IMR-90 (cell line): ENCODE measurements at regions of chr5 and their contacts with region 1.

Region 1: GRCh38 chr5:18113721-18114120 is 479.5 kb downstream of the TAF11L14 start:
- DNase-seq: peak; percentile 12
- ATAC-seq: no peak
- H3K4me3 ChIP-seq: no peak overlapping the region
- H3K27ac ChIP-seq: no peak overlapping the region
- H3K4me1 ChIP-seq: no peaks in the 10 kb centered on the region
- H3K27me3 ChIP-seq: no peaks in the 10 kb centered on the region
- CTCF ChIP-seq: peak; percentile 48
- POLR2A ChIP-seq: no peak
- RAD21 ChIP-seq: peak; percentile 56

Region 2: GRCh38 chr5:17255471-17256021 is 858.2 kb before region 1 on chr5:
- CTCF ChIA-PET with region 1: no interaction called
- POLR2A ChIA-PET with region 1: no interaction called
- dilution Hi-C with region 1: no loop called
- in situ Hi-C with region 1: no loop called
- intact Hi-C with region 1: loop called (anchors 10 kb)
- DNase-seq: no peak
- ATAC-seq: no peak; the same call in 1 of the 2 replicates
- H3K4me3 ChIP-seq: no peak overlapping the region
- H3K27ac ChIP-seq: no peak overlapping the region
- H3K4me1 ChIP-seq: peaks cover 34% of the 10 kb centered on the region
- H3K27me3 ChIP-seq: no peaks in the 10 kb centered on the region
- CTCF ChIP-seq: no peak
- POLR2A ChIP-seq: no peak
- RAD21 ChIP-seq: no peak

Region 3: GRCh38 chr5:17732351-17732923 is 381.3 kb before region 1 on chr5:
- CTCF ChIA-PET with region 1: no interaction called
- POLR2A ChIA-PET with region 1: no interaction called
- dilution Hi-C with region 1: no loop called
- in situ Hi-C with region 1: no loop called
- intact Hi-C with region 1: no loop called
- DNase-seq: no peak
- ATAC-seq: no peak
- H3K4me3 ChIP-seq: no peak overlapping the region
- H3K27ac ChIP-seq: no peak overlapping the region
- H3K4me1 ChIP-seq: no peaks in the 10 kb centered on the region
- H3K27me3 ChIP-seq: no peaks in the 10 kb centered on the region
- CTCF ChIP-seq: no peak
- POLR2A ChIP-seq: no peak
- RAD21 ChIP-seq: no peak

Region 4: GRCh38 chr5:18314192-18314778 is 200.6 kb after region 1 on chr5:
- CTCF ChIA-PET with region 1: no interaction called
- POLR2A ChIA-PET with region 1: no interaction called
- dilution Hi-C with region 1: no loop called
- in situ Hi-C with region 1: no loop called
- intact Hi-C with region 1: no loop called
- DNase-seq: peak; percentile 20
- ATAC-seq: no peak
- H3K4me3 ChIP-seq: no peak overlapping the region
- H3K27ac ChIP-seq: no peak overlapping the region
- H3K4me1 ChIP-seq: no peaks in the 10 kb centered on the region
- H3K27me3 ChIP-seq: no peaks in the 10 kb centered on the region
- CTCF ChIP-seq: peak; percentile 48
- POLR2A ChIP-seq: no peak
- RAD21 ChIP-seq: peak; percentile 31; the same call in 1 of the 2 replicates